ENCODE measurements at regions of chr5 and their contacts with region 1.

Region 1: GRCh38 chr5:773517-774264 is 10.8 kb downstream of the ZDHHC11B start:
- DNase-seq: peak in 2 of 4 experiments; percentile 2 to 3
- ATAC-seq: no peak
- H3K4me3 ChIP-seq: no peak overlapping the region
- H3K27ac ChIP-seq: no peak overlapping the region
- H3K4me1 ChIP-seq: peaks cover 0 to 24% of the 10 kb centered on the region in 2 experiments; a peak in 3 of 5 replicates
- H3K27me3 ChIP-seq: peaks cover 0 to 21% of the 10 kb centered on the region in 2 experiments; a peak in 2 of 5 replicates
- CTCF ChIP-seq: no peak
- EP300 ChIP-seq: no peak
- POLR2A ChIP-seq: no peak
- RAD21 ChIP-seq: no peak

Region 2: GRCh38 chr5:683551-684481 is 89.9 kb before region 1 on chr5:
- CTCF ChIA-PET with region 1: no interaction called
- POLR2A ChIA-PET with region 1: no interaction called
- in situ Hi-C with region 1: loop called (anchors 5 kb)
- intact Hi-C with region 1: loop called (anchors 5 kb)
- DNase-seq: no peak
- ATAC-seq: no peak
- H3K4me3 ChIP-seq: no peak overlapping the region
- H3K27ac ChIP-seq: no peak overlapping the region
- H3K4me1 ChIP-seq: no peaks in the 10 kb centered on the region; a peak in 1 of 5 replicates
- H3K27me3 ChIP-seq: peaks cover 7 to 34% of the 10 kb centered on the region in 2 experiments; a peak in 4 of 5 replicates
- CTCF ChIP-seq: no peak
- EP300 ChIP-seq: no peak
- POLR2A ChIP-seq: no peak
- RAD21 ChIP-seq: no peak

Measured in K562 (cell line).